Activated naive CD4-positive, alpha-beta T cell treated with anti-CD3 and anti-CD28 coated beads for 36 hours (primary cell): ENCODE measurements at regions of chr2 and their contacts with region 1.

Region 1: DNA sequence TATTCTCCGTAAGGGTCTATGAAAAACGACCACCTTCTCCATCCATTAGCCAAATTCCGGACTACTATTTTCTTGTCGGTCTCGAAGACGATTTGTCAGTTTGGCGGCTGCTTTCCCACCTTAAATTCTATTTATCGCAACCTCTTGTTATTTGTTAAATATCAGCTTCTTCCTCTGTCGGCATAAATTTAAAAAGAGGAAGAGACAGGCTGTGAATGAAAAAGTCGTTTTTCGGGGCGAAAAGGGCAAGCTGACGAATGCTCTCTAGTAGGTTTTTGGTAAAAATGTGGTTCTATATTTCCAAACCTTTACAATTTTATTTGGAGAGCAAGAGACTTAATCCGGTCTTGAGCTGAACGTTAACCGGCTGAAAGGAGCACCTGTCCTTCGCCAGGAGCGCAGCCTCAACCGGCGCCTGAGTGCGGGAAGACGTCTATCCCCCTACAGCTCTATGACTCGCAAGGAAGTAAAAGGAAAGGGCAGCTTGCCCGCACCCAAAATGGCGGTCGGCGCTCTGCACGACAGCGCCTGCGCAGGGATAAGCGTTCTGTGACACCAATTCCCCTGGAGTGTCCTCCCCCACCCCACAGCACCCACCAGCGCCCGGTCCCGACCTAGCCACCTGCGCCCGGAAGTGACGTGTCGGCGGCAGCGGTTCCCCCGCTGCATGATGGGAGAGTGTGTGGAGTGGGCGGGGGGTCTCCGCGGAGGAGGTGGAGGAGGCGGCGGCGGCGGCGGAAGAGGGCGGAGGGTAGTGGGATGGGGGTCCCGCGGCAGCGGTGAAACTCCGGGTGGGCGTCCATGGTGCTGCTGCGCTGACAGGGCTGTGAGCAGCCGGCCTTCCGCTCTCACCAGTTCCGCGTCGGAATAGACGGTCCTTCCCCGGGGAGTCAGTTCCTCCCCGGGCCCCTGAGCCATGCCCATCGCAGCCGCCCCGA is at the start of gene AFTPH:
- DNase-seq: peak; percentile 99
- H3K4me3 Mint-ChIP-seq: peak within 1 kb of the TSS; percentile 99
- H3K27ac Mint-ChIP-seq: peak within 1 kb of the TSS; percentile 100
- H3K4me1 Mint-ChIP-seq: peaks cover 26% of the 10 kb centered on the region
- H3K27me3 Mint-ChIP-seq: no peaks in the 10 kb centered on the region
- total RNA-seq, gene AFTPH: 25.3 to 27.3 TPM

Region 2: GRCh38 chr2:64434039-64434657 is 89.8 kb before region 1 on chr2:
- CTCF ChIA-PET with region 1: no interaction called
- intact Hi-C with region 1: no loop called
- DNase-seq: no peak
- H3K4me3 Mint-ChIP-seq: no peak overlapping the region
- H3K27ac Mint-ChIP-seq: no peak overlapping the region
- H3K4me1 Mint-ChIP-seq: no peaks in the 10 kb centered on the region
- H3K27me3 Mint-ChIP-seq: peaks cover 21% of the 10 kb centered on the region

Region 3: DNA sequence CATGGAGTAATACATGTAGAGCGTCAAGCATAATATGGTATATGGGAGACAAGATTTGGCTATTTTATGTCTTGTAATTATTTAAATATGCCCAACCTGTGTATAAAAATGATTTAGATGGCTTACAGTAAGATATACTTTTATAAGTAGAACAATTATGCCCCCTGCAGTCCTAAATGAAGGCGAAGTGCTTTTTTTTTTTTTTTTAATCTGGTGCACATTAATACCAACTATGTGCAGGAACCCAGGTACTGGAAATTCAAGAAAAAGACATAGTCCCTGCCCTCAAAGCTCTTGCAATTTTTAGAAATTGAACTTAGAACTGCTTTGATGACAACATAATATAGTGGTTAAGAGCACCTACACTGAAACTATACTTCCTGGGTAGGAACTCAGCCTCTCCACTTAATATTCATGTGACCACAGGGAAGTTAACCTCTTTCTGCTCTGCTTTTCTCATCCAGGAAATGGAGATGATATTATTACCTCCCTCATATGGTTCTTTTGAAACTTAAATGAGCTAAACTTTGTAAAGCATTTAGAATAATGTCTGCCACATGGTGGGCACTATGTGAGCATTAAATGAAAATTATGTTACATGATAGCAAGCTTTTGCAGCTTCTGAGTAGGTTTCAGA is 38.3 kb after region 1 on chr2:
- CTCF ChIA-PET with region 1: interaction called, 104 read pairs
- intact Hi-C with region 1: loop called (anchors 1 kb)
- DNase-seq: no peak
- H3K4me3 Mint-ChIP-seq: no peak overlapping the region
- H3K27ac Mint-ChIP-seq: no peak overlapping the region
- H3K4me1 Mint-ChIP-seq: peaks cover 43% of the 10 kb centered on the region
- H3K27me3 Mint-ChIP-seq: no peaks in the 10 kb centered on the region

Region 4: DNA sequence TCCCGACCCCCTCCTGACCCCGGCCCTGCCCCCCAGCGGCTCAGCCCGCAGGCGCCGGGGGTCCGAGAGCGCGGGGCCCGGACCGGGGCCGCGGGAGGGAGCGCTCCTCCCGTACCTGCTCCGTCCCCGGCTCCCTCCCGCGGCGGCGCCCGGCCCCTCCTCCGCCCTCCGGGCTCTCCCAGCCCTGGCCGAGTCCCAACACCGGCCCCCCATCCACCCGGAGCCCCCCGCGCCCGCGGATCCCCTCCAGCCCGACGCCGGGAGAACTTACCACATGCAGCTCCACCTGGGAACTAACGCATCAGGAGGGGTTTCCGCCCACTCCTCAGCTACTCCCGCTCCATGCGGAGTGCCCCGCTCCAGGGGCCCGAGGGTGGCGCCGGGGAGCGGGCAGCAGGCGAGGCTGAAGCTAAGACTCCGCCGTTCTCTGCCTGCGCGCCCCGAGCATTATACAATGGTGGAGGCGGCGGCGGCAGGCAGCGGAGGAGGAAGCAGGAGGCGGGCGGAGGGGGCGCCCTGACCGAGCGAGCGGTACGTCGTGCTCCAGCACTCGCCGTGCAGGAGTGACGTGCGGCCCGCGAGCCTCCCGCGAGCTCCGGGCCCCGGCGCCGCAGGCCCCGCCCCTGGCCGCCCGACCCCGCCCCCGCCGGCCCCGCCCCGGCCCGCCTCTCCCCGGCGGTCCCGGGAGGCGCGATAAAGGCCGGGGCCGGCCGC is 129.6 kb after region 1 on chr2 and contains the start of gene SERTAD2:
- CTCF ChIA-PET with region 1: interaction called, 5 read pairs
- intact Hi-C with region 1: loop called (anchors 2 kb)
- DNase-seq: peak; percentile 85
- H3K4me3 Mint-ChIP-seq: peak within 1 kb of the TSS; percentile 79
- H3K27ac Mint-ChIP-seq: peak within 1 kb of the TSS; percentile 83
- H3K4me1 Mint-ChIP-seq: peaks cover 74% of the 10 kb centered on the region
- H3K27me3 Mint-ChIP-seq: no peaks in the 10 kb centered on the region
- total RNA-seq, gene SERTAD2: 11.4 to 11.6 TPM

Region 5: DNA sequence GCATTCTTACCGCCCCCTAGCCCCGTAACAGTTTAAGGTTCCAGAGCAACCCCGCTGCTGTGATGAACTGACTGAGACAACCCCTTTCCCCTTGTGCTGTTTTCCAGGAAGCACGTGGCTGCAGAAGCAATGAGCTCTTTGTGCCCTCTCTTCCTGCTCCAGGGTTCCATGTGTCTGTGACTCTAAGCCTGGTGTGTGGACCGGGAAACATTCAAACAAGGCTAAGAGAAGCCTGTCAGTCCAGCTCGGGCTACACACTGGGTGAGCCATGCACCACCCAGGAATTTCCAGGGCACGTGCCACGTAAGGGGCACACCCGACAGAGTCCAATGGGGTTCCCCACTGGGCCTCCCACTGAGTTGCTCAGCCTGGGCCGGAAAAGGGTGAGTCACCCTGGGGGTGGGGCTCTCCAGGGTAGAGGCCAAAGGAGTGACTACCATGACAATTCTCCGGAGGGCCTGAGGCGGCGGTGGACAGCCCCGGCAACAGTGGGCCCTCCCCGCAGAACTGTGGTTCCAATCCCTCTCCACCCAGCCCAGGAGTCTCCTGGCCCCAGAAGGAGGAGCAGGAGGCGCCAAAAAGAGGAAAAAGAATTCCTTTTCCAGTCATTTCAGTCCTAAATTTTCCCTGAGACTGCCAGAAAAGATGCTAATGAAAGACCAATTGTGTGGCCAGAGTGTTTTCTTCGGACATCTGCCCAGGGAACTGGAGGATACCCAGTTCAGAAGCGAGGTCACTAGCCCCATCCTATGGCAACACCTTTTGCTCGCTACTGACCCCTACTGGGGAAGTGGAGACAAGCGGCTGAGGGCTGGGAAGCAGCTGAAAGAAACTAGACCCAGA is 307.4 kb after region 1 on chr2:
- CTCF ChIA-PET with region 1: interaction called, 3 read pairs
- intact Hi-C with region 1: loop called (anchors 1 kb)
- DNase-seq: peak; percentile 94
- H3K4me3 Mint-ChIP-seq: peak overlapping the region; percentile 52
- H3K27ac Mint-ChIP-seq: peak overlapping the region; percentile 81
- H3K4me1 Mint-ChIP-seq: peaks cover 16% of the 10 kb centered on the region
- H3K27me3 Mint-ChIP-seq: peaks cover 5% of the 10 kb centered on the region

Region 6: GRCh38 chr2:64988420-64989125 is 464.6 kb after region 1 on chr2:
- CTCF ChIA-PET with region 1: no interaction called
- intact Hi-C with region 1: loop called (anchors 1 kb)
- DNase-seq: peak; percentile 35
- H3K4me3 Mint-ChIP-seq: peak overlapping the region; percentile 60
- H3K27ac Mint-ChIP-seq: peak overlapping the region; percentile 7
- H3K4me1 Mint-ChIP-seq: peaks cover 35% of the 10 kb centered on the region
- H3K27me3 Mint-ChIP-seq: peaks cover 11% of the 10 kb centered on the region

Region 7: GRCh38 chr2:65432227-65433190 is 908.6 kb after region 1 on chr2 and contains the start of gene SPRED2:
- CTCF ChIA-PET with region 1: no interaction called
- intact Hi-C with region 1: loop called (anchors 2 kb)
- DNase-seq: peak; percentile 89
- H3K4me3 Mint-ChIP-seq: peak within 1 kb of the TSS; percentile 91
- H3K27ac Mint-ChIP-seq: peak within 1 kb of the TSS; percentile 75
- H3K4me1 Mint-ChIP-seq: peaks cover 11% of the 10 kb centered on the region
- H3K27me3 Mint-ChIP-seq: peaks cover 26% of the 10 kb centered on the region
- total RNA-seq, gene SPRED2: 8.0 to 11.4 TPM